A549 (cell line): ENCODE measurements at regions of chr3 and their contacts with region 1.

Region 1: DNA sequence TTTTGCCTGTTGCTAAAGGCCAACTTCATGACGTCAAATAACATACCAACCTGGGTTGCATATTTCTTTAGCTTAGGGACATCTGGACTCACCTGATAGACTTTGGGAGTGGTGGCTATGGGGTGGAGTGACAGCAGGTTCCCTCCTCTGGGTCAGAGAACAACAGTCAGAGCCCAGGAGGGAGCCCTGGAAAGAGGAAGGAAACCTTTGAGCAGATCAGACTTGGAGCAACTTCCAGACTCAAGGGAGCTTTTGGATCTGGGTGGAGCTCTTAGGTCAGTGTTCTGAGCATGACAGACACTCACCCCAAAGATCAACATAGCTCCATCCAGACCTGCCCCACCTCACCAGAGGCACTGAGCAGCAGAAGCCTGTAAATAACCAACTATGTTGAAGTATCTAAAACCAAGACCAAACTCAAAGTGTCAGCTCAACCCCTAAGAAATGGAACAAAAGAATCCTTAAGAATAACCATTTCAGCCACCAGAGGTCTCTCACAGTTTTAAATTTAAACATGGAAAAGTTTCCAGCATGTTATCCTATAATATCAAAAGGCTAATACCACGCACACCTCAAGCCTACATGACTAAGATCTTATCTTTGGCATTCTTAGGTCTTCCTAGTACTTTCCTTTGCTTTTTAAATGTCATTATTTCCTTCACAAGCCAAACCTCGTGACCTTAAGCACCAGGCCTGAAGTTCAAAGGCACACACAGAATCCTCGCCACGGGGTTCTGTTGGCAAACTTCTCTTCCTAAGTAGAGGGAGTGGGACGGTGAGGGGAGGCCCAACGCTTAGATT is 56.4 kb downstream of the UMPS start:
- DNase-seq: peak in 1 of 2 experiments; percentile 66
- ATAC-seq: peak; percentile 62 to 65
- H3K4me3 ChIP-seq: no peak overlapping the region
- H3K27ac ChIP-seq: peak overlapping the region; percentile 76 to 85
- H3K4me1 ChIP-seq: peaks cover 58% of the 10 kb centered on the region
- CTCF ChIP-seq: peak; percentile 65
- EP300 ChIP-seq: no peak
- POLR2A ChIP-seq: no peak
- RAD21 ChIP-seq: peak; percentile 71 to 78

Region 2: DNA sequence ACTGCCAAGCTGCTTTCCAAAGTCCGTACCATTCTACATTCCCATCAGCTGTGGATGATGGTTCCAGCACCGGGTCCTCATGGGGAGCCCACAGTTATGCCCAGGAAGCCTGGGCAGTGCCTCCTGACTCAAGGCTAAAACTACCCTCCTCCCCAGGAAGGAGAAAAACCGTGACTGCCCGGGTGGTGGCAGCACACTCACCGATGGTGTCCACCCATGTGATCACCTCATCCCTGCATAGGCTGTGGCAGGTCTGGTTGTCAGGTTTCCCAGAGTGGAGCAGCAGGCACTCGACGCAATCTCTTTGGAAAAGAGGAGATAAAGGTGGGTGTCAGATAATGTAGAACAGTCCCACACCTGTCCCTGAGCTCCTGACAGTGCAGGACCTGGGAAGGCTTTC is 17.8 kb before region 1 on chr3:
- CTCF ChIA-PET with region 1: interaction called, 42 read pairs
- POLR2A ChIA-PET with region 1: no interaction called
- DNase-seq: peak; percentile 61 to 90
- ATAC-seq: peak; percentile 84 to 86
- H3K4me3 ChIP-seq: no peak overlapping the region
- H3K27ac ChIP-seq: peak overlapping the region; percentile 34 to 82; a peak in 4 of 6 replicates
- H3K4me1 ChIP-seq: peaks cover 50% of the 10 kb centered on the region
- CTCF ChIP-seq: peak; percentile 49
- EP300 ChIP-seq: no peak
- POLR2A ChIP-seq: no peak
- RAD21 ChIP-seq: peak; percentile 45 to 61

Region 3: DNA sequence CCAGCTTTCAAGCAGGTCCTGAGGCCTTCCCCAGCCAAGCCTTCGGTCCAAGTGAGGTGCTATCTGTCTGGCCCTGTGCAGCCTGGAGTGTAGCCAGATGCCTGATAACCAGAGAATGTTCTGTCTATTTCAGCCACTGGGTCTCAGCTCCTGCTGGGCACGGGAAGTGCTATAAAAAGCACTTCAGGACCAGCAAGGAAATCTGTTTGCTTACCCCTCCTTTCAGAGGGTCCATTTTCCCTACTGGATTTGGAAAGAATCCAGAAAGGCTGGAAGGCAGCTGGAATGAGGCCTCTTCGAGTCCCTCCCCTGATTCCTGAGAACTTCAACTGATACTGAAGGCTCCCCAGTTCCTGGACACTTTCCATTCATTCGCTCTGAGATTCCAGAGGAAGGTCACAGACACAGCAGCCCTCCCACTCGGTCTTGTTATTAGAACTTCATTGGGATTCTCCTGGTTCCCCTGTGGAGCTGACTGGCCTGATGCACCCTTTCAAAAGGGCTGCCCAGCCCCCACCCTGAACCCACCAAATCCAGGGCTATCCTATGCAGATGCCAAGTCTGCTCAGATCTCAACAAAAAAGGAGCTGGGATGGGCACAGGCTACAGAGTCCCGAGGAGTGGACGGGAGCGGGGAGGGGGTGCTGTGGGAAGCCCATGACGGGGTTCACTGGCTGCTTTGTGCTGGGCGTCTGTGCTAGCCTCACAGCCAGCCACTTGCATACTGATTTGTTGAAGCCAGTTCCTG is 14.0 kb after region 1 on chr3:
- CTCF ChIA-PET with region 1: interaction called, 48 read pairs
- POLR2A ChIA-PET with region 1: interaction called, 3 read pairs
- DNase-seq: no peak
- ATAC-seq: peak; percentile 16 to 37; a peak in 4 of 6 replicates
- H3K4me3 ChIP-seq: no peak overlapping the region
- H3K27ac ChIP-seq: peak overlapping the region; percentile 43 to 67; a peak in 5 of 6 replicates
- H3K4me1 ChIP-seq: peaks cover 18% of the 10 kb centered on the region
- CTCF ChIP-seq: no peak
- EP300 ChIP-seq: no peak
- POLR2A ChIP-seq: no peak
- RAD21 ChIP-seq: no peak

Region 4: GRCh38 chr3:124887177-124887931 is 100.7 kb after region 1 on chr3 and contains the start of gene ITGB5:
- CTCF ChIA-PET with region 1: interaction called, 11 read pairs
- POLR2A ChIA-PET with region 1: interaction called, 22 read pairs
- DNase-seq: peak; percentile 53 to 88
- ATAC-seq: peak; percentile 84 to 89
- H3K4me3 ChIP-seq: peak within 1 kb of the TSS; percentile 60
- H3K27ac ChIP-seq: peak within 1 kb of the TSS; percentile 90 to 99
- H3K4me1 ChIP-seq: peaks cover 41% of the 10 kb centered on the region
- CTCF ChIP-seq: no peak
- EP300 ChIP-seq: no peak
- POLR2A ChIP-seq: peak; percentile 68
- RAD21 ChIP-seq: no peak; a peak in 1 of 5 replicates
- polyA plus RNA-seq, gene ITGB5: 260 and 476 TPM in 2 replicates

Region 5: DNA sequence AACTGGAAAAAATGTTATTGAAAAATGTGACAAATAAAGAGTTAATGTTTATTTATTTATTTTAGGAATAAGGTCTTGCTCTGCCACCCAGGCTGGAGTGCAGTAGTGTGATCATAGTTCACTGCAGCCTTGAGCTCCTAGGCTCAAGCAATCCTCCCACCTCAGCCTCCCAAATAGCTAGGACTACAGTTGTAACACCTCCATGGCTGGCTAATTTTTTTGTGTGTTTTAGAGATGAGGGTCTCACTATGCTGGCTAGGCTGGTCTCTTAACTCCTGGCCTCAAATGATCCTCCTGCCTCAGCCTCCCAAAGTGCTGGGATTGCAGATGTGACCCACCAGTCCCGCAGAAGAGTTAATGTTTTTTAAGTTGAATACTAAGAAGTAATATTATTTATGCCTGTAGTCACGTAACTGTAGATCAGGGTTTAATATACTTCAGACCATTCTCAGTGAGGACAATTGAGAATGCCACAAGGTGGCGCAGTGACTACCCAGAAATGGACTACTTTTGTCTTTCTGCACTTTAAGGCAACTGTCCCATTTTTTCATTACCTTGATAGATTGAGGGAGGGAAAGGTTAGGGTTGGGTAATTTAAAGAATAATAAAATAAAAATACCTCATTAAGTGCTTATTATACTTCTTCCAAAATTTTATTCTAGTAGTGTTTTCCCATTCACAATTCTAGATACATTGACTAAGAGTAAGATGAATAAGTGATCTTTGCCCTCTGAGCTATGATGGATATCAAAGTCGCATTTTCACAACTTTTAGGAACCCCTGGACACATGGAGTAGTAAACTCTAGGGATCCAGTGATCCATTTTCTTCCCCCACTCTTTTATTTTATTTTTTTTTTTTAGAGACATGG is 141.9 kb after region 1 on chr3:
- CTCF ChIA-PET with region 1: interaction called, 11 read pairs
- POLR2A ChIA-PET with region 1: no interaction called
- DNase-seq: peak; percentile 38 to 73
- ATAC-seq: peak; percentile 77 to 92; a peak in 5 of 6 replicates
- H3K4me3 ChIP-seq: no peak overlapping the region
- H3K27ac ChIP-seq: peak overlapping the region; percentile 33 to 69; a peak in 3 of 6 replicates
- H3K4me1 ChIP-seq: peaks cover 13% of the 10 kb centered on the region; the same call in 1 of the 3 replicates
- CTCF ChIP-seq: peak; percentile 93
- EP300 ChIP-seq: no peak
- POLR2A ChIP-seq: no peak
- RAD21 ChIP-seq: peak; percentile 82 to 86